ENCODE measurements at regions of chr15 and their contacts with region 1.

Region 1: GRCh38 chr15:60592371-60593169 is 113.6 kb upstream of the ICE2 start:
- DNase-seq: peak; percentile 82
- H3K4me3 ChIP-seq: peak overlapping the region; percentile 65 to 67 (median 67)
- H3K27ac ChIP-seq: no peak overlapping the region
- H3K4me1 ChIP-seq: peaks cover 10% of the 10 kb centered on the region
- H3K27me3 ChIP-seq: peaks cover 2% of the 10 kb centered on the region
- CTCF ChIP-seq: peak in 1 of 2 donors; percentile 28

Region 2: GRCh38 chr15:60568301-60568742 is 24.2 kb before region 1 on chr15:
- CTCF ChIA-PET with region 1: no interaction called
- dilution Hi-C with region 1: no loop called
- in situ Hi-C with region 1: no loop called
- intact Hi-C with region 1: no loop called
- DNase-seq: no peak
- H3K4me3 ChIP-seq: no peak overlapping the region
- H3K27ac ChIP-seq: no peak overlapping the region
- H3K4me1 ChIP-seq: no peaks in the 10 kb centered on the region
- H3K27me3 ChIP-seq: no peaks in the 10 kb centered on the region
- CTCF ChIP-seq: no peak

Region 3: DNA sequence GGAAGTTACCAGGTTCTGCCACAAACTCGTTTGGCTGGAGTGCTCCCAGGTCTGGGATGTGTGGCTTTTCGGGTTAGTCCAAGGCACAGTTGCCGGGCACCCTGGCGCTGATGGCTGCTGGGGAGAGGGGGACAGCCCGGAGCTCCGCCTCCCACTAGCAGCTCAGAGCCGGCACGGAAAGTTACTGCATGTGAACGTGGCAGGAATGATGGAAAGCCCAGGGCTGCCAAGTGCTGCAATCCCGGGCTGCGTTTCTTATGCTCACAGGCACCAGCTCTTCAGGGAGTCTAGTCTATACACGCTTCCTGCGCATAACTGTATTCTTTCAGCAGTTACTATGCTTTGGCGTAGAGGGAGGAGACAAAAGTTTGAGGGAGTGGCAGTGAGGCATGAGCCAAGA is 28.1 kb after region 1 on chr15:
- CTCF ChIA-PET with region 1: interaction called, 13 read pairs
- dilution Hi-C with region 1: no loop called
- in situ Hi-C with region 1: no loop called
- intact Hi-C with region 1: no loop called
- DNase-seq: no peak
- H3K4me3 ChIP-seq: no peak overlapping the region
- H3K27ac ChIP-seq: no peak overlapping the region
- H3K4me1 ChIP-seq: no peaks in the 10 kb centered on the region
- H3K27me3 ChIP-seq: no peaks in the 10 kb centered on the region
- CTCF ChIP-seq: no peak

Region 4: GRCh38 chr15:60673918-60674558 is 81.5 kb after region 1 on chr15:
- CTCF ChIA-PET with region 1: no interaction called
- dilution Hi-C with region 1: no loop called
- in situ Hi-C with region 1: no loop called
- intact Hi-C with region 1: loop called (anchors 10 kb)
- DNase-seq: peak; percentile 91
- H3K4me3 ChIP-seq: no peak overlapping the region
- H3K27ac ChIP-seq: peak overlapping the region; percentile 71
- H3K4me1 ChIP-seq: peaks cover 12% of the 10 kb centered on the region
- H3K27me3 ChIP-seq: no peaks in the 10 kb centered on the region
- CTCF ChIP-seq: no peak

Region 5: DNA sequence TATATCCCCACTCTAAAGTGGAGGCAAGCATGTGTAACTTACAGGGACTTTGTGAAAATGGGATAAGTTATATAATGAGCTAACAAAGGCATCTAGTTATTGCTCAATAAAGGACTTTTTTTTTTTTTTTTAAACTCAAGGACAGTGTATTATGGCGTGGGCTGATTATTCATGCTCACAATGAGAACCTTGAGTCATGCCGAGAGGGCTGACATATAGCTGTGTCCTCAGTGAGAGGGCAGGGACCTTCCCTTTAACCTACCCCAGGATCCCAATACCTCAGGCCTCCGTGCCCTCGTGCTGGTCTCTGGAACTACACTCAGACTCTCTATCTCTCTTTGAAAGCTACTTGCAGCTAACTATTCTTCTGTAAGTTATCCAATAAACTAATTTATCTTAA is 206.3 kb after region 1 on chr15:
- CTCF ChIA-PET with region 1: no interaction called
- dilution Hi-C with region 1: no loop called
- in situ Hi-C with region 1: no loop called
- intact Hi-C with region 1: loop called (anchors 10 kb)
- DNase-seq: peak; percentile 72
- H3K4me3 ChIP-seq: no peak overlapping the region
- H3K27ac ChIP-seq: no peak overlapping the region
- H3K4me1 ChIP-seq: no peaks in the 10 kb centered on the region
- H3K27me3 ChIP-seq: peaks cover 2% of the 10 kb centered on the region
- CTCF ChIP-seq: no peak

Region 6: DNA sequence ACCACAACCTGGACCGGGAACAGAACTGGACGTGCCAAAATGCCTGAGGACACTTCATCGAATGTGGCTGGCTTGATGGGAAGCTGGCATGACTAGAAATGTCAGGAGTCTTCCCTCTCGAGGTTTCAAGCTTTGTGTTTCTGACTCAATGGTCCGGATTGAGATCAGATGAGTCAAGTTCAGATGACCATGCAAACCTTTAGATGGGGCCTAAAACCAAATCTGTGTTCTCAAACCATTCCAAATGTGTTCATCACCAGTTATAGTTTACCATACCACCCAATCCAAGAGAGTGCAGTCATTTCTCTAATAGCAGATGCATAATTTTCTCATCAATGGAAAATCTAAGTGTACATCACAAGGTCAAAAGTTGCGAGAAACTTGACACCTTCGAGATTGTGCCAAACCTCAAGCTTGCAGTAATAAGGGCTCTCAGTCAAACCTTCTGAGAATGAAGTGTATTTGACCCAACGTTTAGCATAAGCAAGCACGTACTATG is 267.5 kb after region 1 on chr15:
- CTCF ChIA-PET with region 1: interaction called, 4 read pairs
- dilution Hi-C with region 1: no loop called
- in situ Hi-C with region 1: no loop called
- intact Hi-C with region 1: loop called (anchors 5 kb)
- DNase-seq: peak; percentile 67
- H3K4me3 ChIP-seq: no peak overlapping the region
- H3K27ac ChIP-seq: no peak overlapping the region
- H3K4me1 ChIP-seq: no peaks in the 10 kb centered on the region
- H3K27me3 ChIP-seq: no peaks in the 10 kb centered on the region
- CTCF ChIP-seq: no peak

Region 7: DNA sequence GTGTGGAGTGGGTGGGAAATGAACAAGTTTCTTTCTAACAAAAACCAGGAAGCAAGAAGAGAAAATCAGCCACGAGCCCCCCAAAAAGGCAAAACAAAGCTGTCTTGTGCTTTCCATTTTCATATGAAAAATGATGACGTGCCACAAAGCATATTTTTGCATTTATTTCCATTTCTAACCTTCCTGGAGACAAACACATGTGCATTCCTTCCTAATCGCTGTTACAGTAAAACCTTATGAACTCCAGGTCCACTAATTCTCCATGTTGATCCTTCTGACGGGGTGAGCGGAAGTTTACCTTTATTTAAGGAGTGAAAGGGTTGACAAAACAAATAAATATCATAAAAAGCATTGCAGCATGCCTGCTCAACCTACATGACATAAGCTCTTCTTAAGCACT is 425.1 kb after region 1 on chr15:
- CTCF ChIA-PET with region 1: no interaction called
- dilution Hi-C with region 1: no loop called
- in situ Hi-C with region 1: no loop called
- intact Hi-C with region 1: no loop called
- DNase-seq: no peak
- H3K4me3 ChIP-seq: no peak overlapping the region
- H3K27ac ChIP-seq: no peak overlapping the region
- H3K4me1 ChIP-seq: no peaks in the 10 kb centered on the region
- H3K27me3 ChIP-seq: no peaks in the 10 kb centered on the region
- CTCF ChIP-seq: no peak

Measured in mammary epithelial cell (primary cell).